ENCODE measurements at regions of chr12 and their contacts with region 1.

Region 1: DNA sequence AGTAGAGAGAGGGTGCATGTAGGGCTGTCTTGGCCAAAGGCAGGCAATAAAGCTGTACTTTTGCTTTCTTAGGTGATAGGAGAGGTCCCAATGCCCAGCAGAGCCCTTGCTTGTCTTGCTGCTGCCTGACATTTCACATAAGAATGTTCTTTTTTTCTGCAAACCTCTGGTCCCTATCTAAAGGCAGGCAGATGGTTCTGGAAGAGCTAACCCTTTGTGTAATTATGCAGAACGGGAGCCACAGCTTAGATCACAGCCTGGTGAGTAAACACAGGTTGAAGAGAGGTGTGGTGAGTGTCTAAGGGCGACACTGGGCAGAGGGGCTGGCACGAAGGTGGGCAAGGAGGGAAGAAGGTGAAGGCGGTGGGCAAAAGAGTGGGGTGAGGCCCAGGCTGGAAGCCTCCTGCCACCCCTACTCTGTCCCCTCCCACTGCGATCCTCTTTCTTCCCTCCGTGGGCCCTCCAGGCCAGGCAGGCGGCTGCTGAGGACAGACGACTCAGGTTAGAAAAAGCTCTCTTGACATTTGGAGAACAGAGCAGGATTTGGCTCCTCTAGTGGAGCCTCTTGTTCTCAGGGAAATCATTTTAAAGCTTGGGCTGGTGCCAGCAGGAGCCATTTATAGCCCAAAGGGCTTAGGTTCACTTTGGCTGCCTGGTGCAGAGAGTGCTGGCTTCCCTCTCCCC is 42.8 kb downstream of the PRMT8 start:
- DNase-seq: peak in 2 of 10 donors; percentile 58 to 93
- H3K4me3 ChIP-seq: no peak overlapping the region
- H3K27ac ChIP-seq: peak overlapping the region in 36 of 59 donors; percentile 1 to 93 (median 42)
- H3K27me3 ChIP-seq: peaks cover 0 to 4% (median 0%) of the 10 kb centered on the region in 45 donors
- CTCF ChIP-seq: peak in 1 of 56 donors; percentile 7

Region 2: GRCh38 chr12:3421191-3421978 is 112.5 kb before region 1 on chr12:
- intact Hi-C with region 1: no loop called
- DNase-seq: no peak
- H3K4me3 ChIP-seq: no peak overlapping the region
- H3K27ac ChIP-seq: peak overlapping the region in 10 of 59 donors; percentile 2 to 64 (median 12)
- H3K27me3 ChIP-seq: peaks cover 0 to 27% (median 0%) of the 10 kb centered on the region in 45 donors
- CTCF ChIP-seq: no peak

Region 3: DNA sequence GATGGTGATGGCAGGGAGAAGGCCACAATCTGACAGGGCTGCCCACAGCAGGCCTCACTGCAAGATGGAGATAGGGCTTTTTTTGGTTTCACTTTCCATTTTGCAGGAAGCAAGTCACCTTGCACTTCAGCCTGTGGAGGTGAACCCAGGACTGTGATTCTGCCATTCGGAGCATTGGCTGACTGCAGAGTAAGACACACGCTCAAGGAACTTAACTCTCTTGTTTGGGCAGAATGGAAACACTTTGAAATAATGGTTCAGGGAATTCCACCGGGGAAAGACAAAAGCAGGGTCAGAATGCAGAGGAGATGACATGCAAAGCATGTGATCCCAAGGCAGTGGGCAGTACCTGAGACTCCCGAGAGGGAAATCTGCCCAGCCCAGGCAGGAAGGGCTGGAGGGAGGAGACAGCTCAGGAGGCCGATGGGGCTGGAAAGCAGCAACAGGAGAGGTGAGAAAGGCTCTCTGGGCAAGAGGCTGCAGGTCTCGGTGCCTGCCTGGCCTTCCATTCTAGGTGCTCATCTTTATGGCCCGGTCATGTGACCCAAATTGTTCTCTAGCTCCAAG is 101.6 kb before region 1 on chr12:
- intact Hi-C with region 1: no loop called
- DNase-seq: no peak
- H3K4me3 ChIP-seq: no peak overlapping the region
- H3K27ac ChIP-seq: no peak overlapping the region
- H3K27me3 ChIP-seq: no peaks in the 10 kb centered on the region
- CTCF ChIP-seq: no peak

Region 4: DNA sequence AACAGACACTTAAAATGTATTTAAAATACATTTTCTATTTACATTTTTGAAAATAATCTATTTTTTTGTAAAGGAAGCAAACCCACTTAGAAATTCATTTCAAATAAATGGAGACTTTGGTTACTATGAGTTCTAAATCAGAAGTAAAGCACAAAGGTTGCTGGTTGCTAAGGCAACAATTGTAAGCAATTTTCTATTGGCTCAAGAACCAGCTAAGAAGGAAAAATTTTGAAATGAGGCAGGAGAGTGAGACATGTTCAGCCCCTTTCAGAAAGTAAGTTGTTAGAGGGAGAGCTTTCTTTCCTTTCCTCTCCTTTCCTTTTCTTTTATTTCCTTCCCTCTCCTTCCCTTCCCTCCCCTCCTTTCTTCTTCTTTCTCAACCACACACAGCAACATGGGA is 37.9 kb after region 1 on chr12:
- intact Hi-C with region 1: no loop called
- DNase-seq: no peak
- H3K4me3 ChIP-seq: no peak overlapping the region
- H3K27ac ChIP-seq: peak overlapping the region in 7 of 59 donors; percentile 11 to 41 (median 21)
- H3K27me3 ChIP-seq: no peaks in the 10 kb centered on the region
- CTCF ChIP-seq: no peak

Region 5: GRCh38 chr12:3622021-3622821 is 88.4 kb after region 1 on chr12:
- intact Hi-C with region 1: loop called in 1 of 2 experiments (anchors 5 kb)
- DNase-seq: no peak
- H3K4me3 ChIP-seq: no peak overlapping the region
- H3K27ac ChIP-seq: peak overlapping the region in 56 of 59 donors; percentile 7 to 90 (median 72)
- H3K27me3 ChIP-seq: no peaks in the 10 kb centered on the region
- CTCF ChIP-seq: no peak